T-cell (primary cell): ENCODE measurements at regions of chr3 and their contacts with region 1.

Region 1: GRCh38 chr3:189588070-189588820 is 42.9 kb upstream of the TP63 start:
- DNase-seq: no peak
- ATAC-seq: no peak
- H3K4me3 ChIP-seq: no peak overlapping the region
- H3K4me3 Mint-ChIP-seq: no peak overlapping the region
- H3K27ac ChIP-seq: no peak overlapping the region
- H3K27ac Mint-ChIP-seq: no peak overlapping the region
- H3K4me1 ChIP-seq: no peaks in the 10 kb centered on the region
- H3K4me1 Mint-ChIP-seq: no peaks in the 10 kb centered on the region
- H3K27me3 ChIP-seq: no peaks in the 10 kb centered on the region
- H3K27me3 Mint-ChIP-seq: peaks cover 0 to 6% of the 10 kb centered on the region in 2 donors

Region 2: GRCh38 chr3:189288348-189289235 is 299.7 kb before region 1 on chr3:
- CTCF ChIA-PET with region 1: interaction called in 1 of 2 experiments, 10 read pairs
- POLR2A ChIA-PET with region 1: no interaction called
- DNase-seq: no peak
- ATAC-seq: no peak
- H3K4me3 ChIP-seq: no peak overlapping the region
- H3K4me3 Mint-ChIP-seq: peak overlapping the region in 1 of 3 donors; percentile 2
- H3K27ac ChIP-seq: no peak overlapping the region
- H3K27ac Mint-ChIP-seq: no peak overlapping the region
- H3K4me1 ChIP-seq: peaks cover 8 to 31% of the 10 kb centered on the region in 2 experiments
- H3K4me1 Mint-ChIP-seq: peaks cover 34 to 45% (median 35%) of the 10 kb centered on the region in 3 donors
- H3K27me3 ChIP-seq: no peaks in the 10 kb centered on the region
- H3K27me3 Mint-ChIP-seq: no peaks in the 10 kb centered on the region

Region 3: DNA sequence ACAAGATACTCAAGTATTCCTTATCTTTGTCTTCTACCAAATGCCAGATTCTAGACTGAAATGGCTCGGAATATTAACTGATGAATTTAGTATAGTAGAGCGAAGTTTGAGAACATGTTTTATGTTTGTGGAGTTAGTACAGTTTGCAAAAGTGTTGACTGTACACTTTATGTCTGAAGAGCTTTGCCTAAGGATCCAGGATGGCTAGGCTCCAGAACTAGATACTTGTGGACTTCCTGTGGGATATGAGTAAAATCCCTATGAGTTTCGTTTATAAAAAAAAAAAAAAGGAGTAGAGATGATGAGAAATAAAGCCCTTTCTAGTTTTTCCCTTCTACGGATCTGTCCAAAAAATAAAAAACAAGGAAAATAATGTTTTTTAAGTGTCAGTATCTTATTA is 139.7 kb after region 1 on chr3:
- CTCF ChIA-PET with region 1: no interaction called
- POLR2A ChIA-PET with region 1: no interaction called
- DNase-seq: no peak
- ATAC-seq: no peak
- H3K4me3 ChIP-seq: no peak overlapping the region
- H3K4me3 Mint-ChIP-seq: no peak overlapping the region
- H3K27ac ChIP-seq: no peak overlapping the region
- H3K27ac Mint-ChIP-seq: no peak overlapping the region
- H3K4me1 ChIP-seq: no peaks in the 10 kb centered on the region
- H3K4me1 Mint-ChIP-seq: no peaks in the 10 kb centered on the region
- H3K27me3 ChIP-seq: no peaks in the 10 kb centered on the region
- H3K27me3 Mint-ChIP-seq: peaks cover 0 to 3% of the 10 kb centered on the region in 2 donors